ENCODE measurements at regions of chr10 and their contacts with region 1.

Region 1: DNA sequence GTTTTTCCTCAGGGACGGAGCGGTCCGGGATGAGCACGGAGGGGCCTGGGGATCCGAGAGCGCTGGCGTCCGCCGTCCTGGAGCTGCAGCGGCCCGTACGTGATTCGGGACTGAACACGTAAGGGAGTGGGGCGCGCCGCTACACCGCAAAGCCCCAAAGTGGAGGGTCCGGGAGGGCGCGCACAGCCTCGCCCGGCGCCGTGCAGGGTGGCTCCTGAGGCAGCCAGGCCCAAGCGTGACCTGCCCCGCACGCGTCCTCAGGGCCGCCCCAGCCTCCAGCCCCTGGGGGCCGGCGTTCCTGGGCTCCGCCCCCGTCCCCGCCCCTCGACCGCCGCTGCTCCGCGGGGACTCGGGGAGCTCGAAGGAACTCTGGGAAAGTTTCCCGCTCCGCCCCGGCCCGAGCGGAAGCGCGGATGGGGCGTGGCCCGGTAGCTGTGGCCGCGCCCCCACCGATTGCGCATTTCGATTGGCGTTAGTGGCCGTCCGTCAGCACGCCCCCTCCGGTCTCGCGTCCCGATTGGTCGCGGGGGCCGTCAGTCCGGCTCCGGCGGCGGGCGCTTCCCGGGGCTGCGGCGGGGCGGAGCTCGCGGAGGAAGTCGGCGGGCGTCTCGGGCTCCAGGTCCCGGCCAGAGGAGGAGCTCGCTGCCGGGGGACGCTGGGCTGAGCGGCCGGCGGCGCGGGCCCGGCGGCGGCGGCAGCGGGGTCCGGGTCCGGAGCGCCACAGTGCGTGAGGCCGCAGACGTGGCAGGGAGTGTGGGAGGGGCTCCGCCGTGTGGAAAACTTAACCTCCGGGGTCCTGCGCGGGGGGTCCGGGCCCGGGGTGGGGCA is at the starts of genes ANKRD16 and FBH1:
- DNase-seq: peak; percentile 86 to 99
- H3K4me3 ChIP-seq: peak within 1 kb of the TSS; percentile 80 to 95
- H3K27ac ChIP-seq: peak within 1 kb of the TSS; percentile 84 to 85
- H3K4me1 ChIP-seq: peaks cover 2 to 25% of the 10 kb centered on the region in 2 donors
- H3K27me3 ChIP-seq: no peaks in the 10 kb centered on the region
- CTCF ChIP-seq: no peak
- total RNA-seq, gene ANKRD16: 10.4 TPM
- total RNA-seq, gene FBH1: 43.0 TPM

Region 2: DNA sequence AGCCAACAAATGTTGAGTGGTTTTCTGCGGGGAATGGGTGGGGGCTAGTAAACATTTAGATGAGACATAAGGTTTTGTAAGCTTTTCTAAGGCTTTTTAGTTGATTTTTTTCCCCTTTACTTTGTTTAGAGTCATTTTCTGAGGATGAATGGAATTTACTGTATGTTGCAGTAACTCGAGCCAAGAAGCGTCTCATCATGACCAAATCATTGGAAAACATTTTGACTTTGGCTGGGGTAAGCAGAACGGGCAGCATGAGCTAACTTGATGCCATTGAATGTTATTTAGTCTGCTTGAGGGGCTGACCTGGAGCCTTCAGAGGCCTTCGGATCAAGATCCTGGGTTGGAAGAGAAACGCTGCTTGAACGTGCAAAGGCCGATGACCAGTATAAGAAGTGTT is 37.5 kb after region 1 on chr10:
- intact Hi-C with region 1: loop called (anchors 2 kb)
- DNase-seq: no peak
- H3K4me3 ChIP-seq: no peak overlapping the region
- H3K27ac ChIP-seq: peak overlapping the region; percentile 70 to 85
- H3K4me1 ChIP-seq: peaks cover 0 to 10% of the 10 kb centered on the region in 2 donors
- H3K27me3 ChIP-seq: no peaks in the 10 kb centered on the region
- CTCF ChIP-seq: no peak

Region 3: GRCh38 chr10:6088721-6089390 is 199.0 kb after region 1 on chr10 and contains the start of gene RBM17:
- intact Hi-C with region 1: loop called (anchors 1 kb)
- DNase-seq: peak; percentile 86 to 99
- H3K4me3 ChIP-seq: peak within 1 kb of the TSS; percentile 71 to 96
- H3K27ac ChIP-seq: peak within 1 kb of the TSS; percentile 71 to 84
- H3K4me1 ChIP-seq: peaks cover 4 to 27% of the 10 kb centered on the region in 2 donors
- H3K27me3 ChIP-seq: no peaks in the 10 kb centered on the region
- CTCF ChIP-seq: peak; percentile 99 to 100 (median 100)
- total RNA-seq, gene RBM17: 22.7 TPM